Panc1 (cell line): ENCODE measurements at regions of chr1 and their contacts with region 1.

Region 1: DNA sequence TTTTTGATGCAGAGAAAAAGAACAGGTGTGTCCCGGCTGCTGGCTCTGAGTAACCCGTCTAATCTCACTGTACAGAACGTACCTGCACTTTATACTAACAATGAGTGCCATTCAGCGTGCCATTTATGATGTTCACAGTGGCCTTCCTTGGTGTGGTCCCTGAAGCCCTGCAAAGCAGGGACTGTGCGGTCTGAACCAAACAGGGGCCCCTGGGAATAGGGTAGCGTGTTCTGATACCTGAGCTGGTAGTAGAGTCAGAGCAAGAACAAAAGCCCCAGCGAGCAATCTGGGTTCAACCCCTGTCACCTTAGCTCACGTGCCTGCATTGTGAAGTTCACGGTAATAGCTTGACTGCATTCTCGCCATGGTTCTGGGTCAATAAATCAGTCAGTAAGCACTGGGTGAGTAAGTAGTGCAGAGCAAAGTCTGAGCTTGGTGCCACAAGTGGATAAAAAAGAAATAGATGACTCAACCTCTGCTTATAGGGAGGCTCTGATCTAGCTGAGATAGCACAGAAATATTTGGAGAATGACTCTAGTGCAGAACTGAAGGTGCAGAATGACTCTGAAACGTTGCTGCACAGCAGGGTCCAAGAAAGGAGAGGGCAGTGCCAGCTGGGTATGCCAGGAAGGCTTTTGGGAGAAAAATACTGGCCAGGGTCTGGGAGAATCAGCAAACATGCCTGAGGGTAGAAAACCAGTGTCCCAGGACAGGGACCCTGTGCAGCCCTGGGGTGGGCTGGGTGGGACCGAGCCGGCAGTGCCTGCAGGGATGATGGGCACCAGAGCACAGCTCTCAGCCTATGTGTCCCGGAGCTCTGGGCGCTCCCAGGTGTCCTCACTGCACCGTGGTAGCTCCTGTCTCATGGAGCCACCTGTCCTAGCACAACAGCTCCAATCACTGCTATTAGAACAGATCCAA is 125.9 kb downstream of the RHOU start:
- DNase-seq: peak; percentile 80
- ATAC-seq: peak; percentile 95
- H3K4me3 ChIP-seq: peak overlapping the region in 1 of 2 experiments; percentile 12; a peak in 2 of 4 replicates
- H3K27ac ChIP-seq: peak overlapping the region; percentile 72
- H3K4me1 ChIP-seq: peaks cover 50% of the 10 kb centered on the region
- H3K27me3 ChIP-seq: no peaks in the 10 kb centered on the region
- CTCF ChIP-seq: no peak

Region 2: DNA sequence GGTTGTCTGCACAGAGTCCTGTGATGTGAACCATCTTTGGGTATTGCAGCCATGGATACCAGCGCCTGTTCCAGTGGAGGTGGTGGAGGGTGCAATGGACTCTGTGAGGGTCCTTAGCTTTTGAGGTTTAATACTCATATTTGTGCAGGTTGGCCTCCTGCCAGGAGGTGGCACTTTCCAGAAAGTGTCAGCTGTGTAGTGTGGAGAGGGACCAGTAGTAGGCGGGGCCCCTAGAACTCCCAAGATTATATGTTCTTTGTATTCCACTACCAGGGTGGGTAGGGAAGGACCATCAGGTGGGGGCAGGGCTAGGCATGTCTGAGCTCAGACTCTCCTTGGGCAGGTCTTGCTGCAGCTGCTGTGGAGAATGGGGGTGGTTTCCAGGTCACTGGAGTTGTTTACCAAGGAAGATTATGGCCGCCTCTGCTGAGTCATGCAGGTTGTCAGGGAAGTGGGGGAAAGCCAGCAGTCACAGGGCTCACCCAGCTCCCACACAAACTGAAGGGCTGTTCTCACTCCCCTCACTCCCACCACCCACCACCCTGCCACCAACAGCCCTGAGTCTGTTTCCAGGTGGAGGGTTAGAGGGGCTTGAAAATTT is 1329.1 kb before region 1 on chr1:
- CTCF ChIA-PET with region 1: no interaction called
- POLR2A ChIA-PET with region 1: no interaction called
- in situ Hi-C with region 1: no loop called
- intact Hi-C with region 1: no loop called
- DNase-seq: no peak
- ATAC-seq: no peak
- H3K4me3 ChIP-seq: no peak overlapping the region
- H3K27ac ChIP-seq: no peak overlapping the region
- H3K4me1 ChIP-seq: no peaks in the 10 kb centered on the region
- H3K27me3 ChIP-seq: no peaks in the 10 kb centered on the region
- CTCF ChIP-seq: no peak

Region 3: GRCh38 chr1:228783418-228784040 is 77.6 kb before region 1 on chr1:
- CTCF ChIA-PET with region 1: interaction called, 6 read pairs
- POLR2A ChIA-PET with region 1: no interaction called
- in situ Hi-C with region 1: no loop called
- intact Hi-C with region 1: loop called (anchors 2 kb)
- DNase-seq: no peak
- ATAC-seq: 0 out of 2 replicates have a peak, but pooled peaks have one; percentile 19
- H3K4me3 ChIP-seq: no peak overlapping the region
- H3K27ac ChIP-seq: no peak overlapping the region
- H3K4me1 ChIP-seq: no peaks in the 10 kb centered on the region
- H3K27me3 ChIP-seq: no peaks in the 10 kb centered on the region
- CTCF ChIP-seq: no peak

Region 4: DNA sequence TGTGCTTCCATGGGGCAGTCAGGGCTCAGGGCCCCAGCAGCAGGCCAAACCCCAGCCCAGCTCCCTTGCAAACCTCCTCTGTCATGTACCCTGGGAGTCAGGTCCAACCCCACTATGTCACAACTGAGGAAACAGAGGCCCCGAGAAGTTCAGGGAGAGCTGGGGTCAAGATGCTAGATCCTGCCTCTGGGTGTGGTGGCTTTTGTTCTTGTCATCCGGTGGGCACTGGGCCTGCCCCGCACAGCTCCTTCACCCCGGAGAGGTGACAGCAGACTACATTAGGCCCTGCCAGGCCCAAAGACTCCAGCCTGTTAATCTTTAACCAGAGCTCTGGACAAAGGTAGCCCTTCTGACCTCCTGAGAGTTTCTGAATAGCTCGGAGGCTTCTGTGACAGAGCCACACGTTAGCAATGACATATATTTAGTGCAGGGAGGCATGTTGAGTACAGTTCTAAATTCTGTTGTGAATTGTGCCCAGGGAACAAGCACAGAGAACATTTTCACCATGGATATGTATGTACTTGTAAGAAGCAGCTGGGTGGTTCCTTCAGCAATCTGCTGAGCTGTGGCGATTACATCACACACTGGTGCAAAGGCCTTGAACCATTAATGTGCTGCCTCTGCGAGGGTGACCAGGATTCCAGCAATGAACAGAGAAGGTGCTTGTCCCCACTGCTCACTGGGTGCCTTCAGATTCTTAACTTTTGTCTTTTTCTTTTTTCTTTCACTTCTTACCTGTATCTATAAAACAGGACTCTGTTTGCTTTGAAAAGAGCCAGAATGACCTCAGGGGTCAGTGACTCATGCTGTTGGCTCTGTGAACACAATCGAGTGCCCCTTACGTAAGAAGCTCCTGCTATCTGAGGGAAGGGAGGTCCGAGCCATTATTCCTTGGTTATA is 23.1 kb before region 1 on chr1:
- CTCF ChIA-PET with region 1: no interaction called
- POLR2A ChIA-PET with region 1: no interaction called
- in situ Hi-C with region 1: no loop called
- intact Hi-C with region 1: no loop called
- DNase-seq: peak; percentile 85
- ATAC-seq: peak; percentile 87
- H3K4me3 ChIP-seq: no peak overlapping the region
- H3K27ac ChIP-seq: peak overlapping the region; percentile 91
- H3K4me1 ChIP-seq: peaks cover 52% of the 10 kb centered on the region
- H3K27me3 ChIP-seq: no peaks in the 10 kb centered on the region
- CTCF ChIP-seq: no peak